GM12878 (cell line): ENCODE measurements at regions of chr1 and their contacts with region 1.

Region 1: DNA sequence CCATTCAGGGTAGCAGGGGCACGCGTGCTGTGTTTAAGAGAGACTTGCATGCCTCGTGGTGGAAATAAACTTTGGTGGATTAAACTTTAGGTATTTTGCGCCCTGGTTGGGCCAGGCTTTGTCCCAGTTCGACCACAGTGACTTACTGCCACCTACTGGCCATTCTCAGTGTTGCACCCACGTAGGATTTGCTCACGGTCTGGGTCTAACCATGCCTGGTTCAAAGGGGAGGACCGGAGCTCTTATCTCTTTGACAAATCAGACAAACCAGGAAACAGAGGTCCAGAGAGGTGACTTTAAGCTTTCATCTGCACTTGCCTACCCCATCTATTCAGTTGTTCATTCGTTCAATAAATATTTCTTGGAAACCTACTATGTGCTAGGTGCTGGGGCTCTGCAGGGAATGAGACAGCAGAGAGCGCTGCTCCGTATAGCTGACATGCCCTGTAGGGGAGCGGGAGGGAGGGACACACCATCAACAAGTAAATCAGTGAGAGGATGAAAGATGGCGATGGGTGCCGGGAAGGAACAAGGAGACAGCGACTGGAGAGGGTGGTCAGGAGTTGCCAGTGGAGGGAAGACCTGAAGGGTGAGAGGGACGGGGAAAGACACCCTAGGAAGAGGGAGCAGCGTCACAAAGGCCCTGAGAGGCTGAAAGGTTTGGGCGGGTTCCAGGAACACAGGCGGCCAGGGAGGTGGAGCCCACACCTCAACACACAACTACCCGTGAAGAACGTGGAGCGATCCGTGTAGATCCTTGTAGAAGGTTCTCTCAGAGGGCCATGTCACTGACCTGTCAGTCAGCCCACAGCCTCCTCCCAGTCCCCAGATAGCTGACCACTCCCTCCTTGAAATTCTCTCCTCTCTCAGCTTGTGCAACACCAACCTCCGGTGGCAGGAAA is 27.2 kb upstream of the TINAGL1 start:
- DNase-seq: peak; percentile 91
- ATAC-seq: peak; percentile 91
- H3K4me3 ChIP-seq: peak overlapping the region; percentile 23; the same call in 1 of the 2 replicates
- H3K27ac ChIP-seq: peak overlapping the region; percentile 33; the same call in 1 of the 2 replicates
- H3K4me1 ChIP-seq: peaks cover 14% of the 10 kb centered on the region
- H3K27me3 ChIP-seq: no peaks in the 10 kb centered on the region
- CTCF ChIP-seq: peak; percentile 80 to 98 (median 92)
- EP300 ChIP-seq: no peak
- POLR2A ChIP-seq: peak; percentile 38; the same call in 1 of the 2 replicates
- RAD21 ChIP-seq: peak; percentile 87

Region 2: DNA sequence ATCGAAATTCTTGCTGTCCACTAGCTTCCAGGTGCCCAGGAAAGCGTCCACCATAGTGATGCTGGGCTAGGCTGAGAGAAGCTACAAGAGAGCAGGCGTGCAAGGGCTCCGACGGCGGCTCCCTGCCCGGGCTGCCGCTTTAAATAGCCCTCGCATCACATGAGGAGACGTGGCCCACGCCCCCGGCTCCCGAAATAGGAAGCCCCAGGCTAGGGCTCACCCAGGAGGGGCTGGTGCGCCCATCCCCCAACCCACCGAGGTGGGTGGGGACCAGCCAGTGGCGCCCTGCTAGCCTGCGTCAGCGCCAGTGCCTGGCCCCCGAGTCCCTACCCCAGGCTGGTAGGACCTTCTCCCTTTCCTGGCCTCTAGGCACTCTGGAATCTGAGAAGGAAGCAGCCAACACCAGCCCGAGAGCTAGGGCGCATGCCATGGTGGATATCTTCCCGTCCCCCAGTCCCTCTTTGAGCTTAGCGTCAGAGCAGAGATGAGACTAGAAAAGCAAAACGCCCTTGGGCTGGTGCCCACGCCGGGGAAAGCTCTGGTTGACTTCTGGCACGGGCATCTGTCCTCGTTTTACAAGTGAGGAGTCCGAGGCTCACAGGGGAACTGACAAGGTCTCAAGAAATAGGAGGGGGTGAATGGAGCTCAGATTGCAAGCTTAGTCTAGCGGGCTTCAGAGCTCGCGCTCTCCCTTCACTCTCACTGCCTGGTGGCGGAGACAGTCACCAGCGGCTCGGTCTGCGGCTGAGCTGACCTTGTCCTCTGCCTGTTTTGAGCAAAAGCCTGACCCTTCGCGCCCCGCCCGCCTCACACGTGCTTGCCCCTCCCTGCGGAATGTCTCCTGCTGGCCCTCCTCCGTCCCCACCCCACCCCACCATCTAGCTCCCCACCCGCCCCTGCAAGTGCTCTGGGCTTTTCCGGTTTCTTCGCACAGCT is 175.9 kb before region 1 on chr1 and contains the start of gene FABP3:
- CTCF ChIA-PET with region 1: interaction called, 7 read pairs
- POLR2A ChIA-PET with region 1: no interaction called
- RAD21 ChIA-PET with region 1: interaction called, 12 read pairs
- SMC1A ChIA-PET with region 1: no interaction called
- in situ Hi-C with region 1: no loop called
- intact Hi-C with region 1: no loop called
- DNase-seq: no peak
- ATAC-seq: peak; percentile 83
- H3K4me3 ChIP-seq: peak within 1 kb of the TSS; percentile 52
- H3K27ac ChIP-seq: no peak within 1 kb of the TSS
- H3K4me1 ChIP-seq: no peaks in the 10 kb centered on the region
- H3K27me3 ChIP-seq: no peaks in the 10 kb centered on the region
- CTCF ChIP-seq: 0 out of 6 replicates have a peak, but pooled peaks of 1 of the 3 experiments have one; percentile 2
- EP300 ChIP-seq: no peak
- POLR2A ChIP-seq: no peak
- RAD21 ChIP-seq: no peak
- polyA plus RNA-seq, gene FABP3: 0.72 to 1.2 TPM

Region 3: GRCh38 chr1:31460027-31460426 is 89.1 kb before region 1 on chr1:
- CTCF ChIA-PET with region 1: interaction called, 55 read pairs
- POLR2A ChIA-PET with region 1: interaction called, 4 read pairs
- RAD21 ChIA-PET with region 1: interaction called, 35 read pairs
- SMC1A ChIA-PET with region 1: interaction called, 36 read pairs
- in situ Hi-C with region 1: no loop called
- intact Hi-C with region 1: loop called (anchors 5 kb)
- DNase-seq: no peak
- ATAC-seq: no peak
- H3K4me3 ChIP-seq: no peak overlapping the region
- H3K27ac ChIP-seq: no peak overlapping the region
- H3K4me1 ChIP-seq: no peaks in the 10 kb centered on the region
- H3K27me3 ChIP-seq: no peaks in the 10 kb centered on the region
- CTCF ChIP-seq: peak in 1 of 3 experiments; percentile 7; a peak in 1 of 6 replicates
- EP300 ChIP-seq: no peak
- POLR2A ChIP-seq: no peak
- RAD21 ChIP-seq: no peak

Region 4: DNA sequence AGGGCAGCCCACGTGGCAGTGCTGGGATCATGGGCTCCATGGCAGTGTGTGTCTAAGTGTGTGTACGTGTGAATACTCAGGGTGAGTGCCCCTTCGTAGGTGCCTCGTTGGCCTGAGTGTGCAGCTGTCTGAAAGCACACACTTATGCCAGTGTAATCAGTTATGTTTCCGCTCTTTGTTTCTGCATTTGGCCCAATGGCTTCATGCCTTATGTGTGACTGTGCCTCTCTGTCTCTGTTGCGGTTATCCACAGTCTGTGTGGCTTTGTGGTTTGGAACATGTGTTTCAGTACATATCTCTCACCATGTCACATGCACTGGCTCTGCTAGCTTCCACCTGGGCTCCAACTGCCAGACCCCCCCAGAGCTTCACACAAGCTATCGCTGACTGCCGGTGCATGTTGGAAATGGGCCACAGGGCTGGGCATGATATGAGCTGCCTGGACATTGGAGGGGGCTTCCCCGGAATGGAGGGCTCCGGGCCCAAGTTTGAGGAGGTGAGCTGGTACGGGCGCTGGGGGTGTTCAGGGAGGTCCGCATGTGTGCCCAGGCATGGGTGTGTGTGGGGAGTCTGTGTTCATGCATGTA is 43.2 kb before region 1 on chr1:
- CTCF ChIA-PET with region 1: interaction called, 73 read pairs
- POLR2A ChIA-PET with region 1: interaction called, 41 read pairs
- RAD21 ChIA-PET with region 1: interaction called, 116 read pairs
- SMC1A ChIA-PET with region 1: interaction called, 62 read pairs
- in situ Hi-C with region 1: no loop called
- intact Hi-C with region 1: loop called (anchors 1 kb)
- DNase-seq: peak; percentile 83
- ATAC-seq: peak; percentile 56
- H3K4me3 ChIP-seq: no peak overlapping the region
- H3K27ac ChIP-seq: 0 out of 2 replicates have a peak overlapping the region, but pooled peaks have one; percentile 51
- H3K4me1 ChIP-seq: peaks cover 23% of the 10 kb centered on the region
- H3K27me3 ChIP-seq: no peaks in the 10 kb centered on the region
- CTCF ChIP-seq: no peak
- EP300 ChIP-seq: peak; percentile 79 to 91
- POLR2A ChIP-seq: no peak; the same call in 1 of the 2 replicates
- RAD21 ChIP-seq: no peak

Region 5: DNA sequence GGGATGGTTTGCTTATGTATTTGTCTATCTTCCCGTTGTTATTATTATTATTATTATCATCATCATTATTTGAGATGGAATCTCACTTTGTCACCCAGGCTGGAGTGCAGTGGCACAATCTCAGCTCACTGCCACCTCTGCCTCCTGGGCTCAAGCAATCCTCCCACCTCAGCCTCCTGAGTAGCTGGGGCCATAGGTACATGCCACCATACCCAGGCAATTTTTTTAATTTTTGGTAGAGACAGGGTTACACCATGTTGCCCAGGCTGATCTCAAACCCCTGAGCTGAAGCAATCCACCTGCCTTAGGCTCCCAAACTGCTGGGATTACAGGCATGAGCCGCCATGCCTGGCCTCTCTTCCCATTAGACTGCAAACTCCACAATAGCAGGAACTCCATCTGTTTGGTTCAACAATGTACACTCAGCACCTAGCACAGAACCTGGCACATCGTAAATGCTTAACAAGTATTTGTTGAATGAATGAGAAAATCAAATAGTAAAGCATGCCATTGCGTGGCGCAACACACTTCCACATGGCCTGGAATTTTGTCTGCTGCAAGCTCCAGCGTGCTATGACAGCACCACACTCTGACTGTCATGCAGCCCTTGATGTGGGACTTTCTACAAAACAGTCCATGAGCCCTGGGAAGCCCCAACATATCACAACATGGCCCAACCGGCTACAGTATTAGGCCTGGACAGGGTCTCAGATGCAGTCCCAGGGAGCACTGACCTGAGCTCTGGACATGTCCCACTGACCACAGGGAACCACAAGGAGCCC is 23.4 kb after region 1 on chr1:
- CTCF ChIA-PET with region 1: interaction called, 12 read pairs
- POLR2A ChIA-PET with region 1: no interaction called
- RAD21 ChIA-PET with region 1: interaction called, 4 read pairs
- SMC1A ChIA-PET with region 1: interaction called, 4 read pairs
- in situ Hi-C with region 1: no loop called
- intact Hi-C with region 1: no loop called
- DNase-seq: no peak
- ATAC-seq: no peak; the same call in 2 of the 3 replicates
- H3K4me3 ChIP-seq: no peak overlapping the region
- H3K27ac ChIP-seq: no peak overlapping the region
- H3K4me1 ChIP-seq: no peaks in the 10 kb centered on the region; the same call in 1 of the 2 replicates
- H3K27me3 ChIP-seq: no peaks in the 10 kb centered on the region
- CTCF ChIP-seq: no peak
- EP300 ChIP-seq: no peak
- POLR2A ChIP-seq: no peak
- RAD21 ChIP-seq: no peak

Region 6: GRCh38 chr1:31789259-31790065 is 240.3 kb after region 1 on chr1:
- CTCF ChIA-PET with region 1: interaction called, 21 read pairs
- POLR2A ChIA-PET with region 1: no interaction called
- RAD21 ChIA-PET with region 1: interaction called, 20 read pairs
- SMC1A ChIA-PET with region 1: interaction called, 7 read pairs
- in situ Hi-C with region 1: no loop called
- intact Hi-C with region 1: loop called (anchors 1 kb)
- DNase-seq: peak; percentile 39
- ATAC-seq: peak; percentile 88
- H3K4me3 ChIP-seq: peak overlapping the region; percentile 79; the same call in 1 of the 2 replicates
- H3K27ac ChIP-seq: no peak overlapping the region
- H3K4me1 ChIP-seq: peaks cover 19% of the 10 kb centered on the region
- H3K27me3 ChIP-seq: no peaks in the 10 kb centered on the region; a peak in 1 of 4 replicates
- CTCF ChIP-seq: peak; percentile 86 to 98 (median 98)
- EP300 ChIP-seq: no peak; a peak in 1 of 4 replicates
- POLR2A ChIP-seq: no peak
- RAD21 ChIP-seq: peak; percentile 98